Heart right ventricle (tissue), 16 donors: ENCODE measurements at regions of chr5 and their contacts with region 1.

Region 1: GRCh38 chr5:96714951-96715451 is 52.8 kb downstream of the CAST start:
- DNase-seq: peak in 1 of 2 donors; percentile 73
- ATAC-seq: peak; percentile 76 to 91 (median 86)
- H3K4me3 ChIP-seq: no peak overlapping the region
- H3K27ac ChIP-seq: peak overlapping the region; percentile 49 to 80 (median 65)
- H3K4me1 ChIP-seq: peaks cover 5 to 98% (median 79%) of the 10 kb centered on the region in 9 donors
- H3K27me3 ChIP-seq: no peaks in the 10 kb centered on the region
- CTCF ChIP-seq: no peak

Region 2: GRCh38 chr5:96133341-96134079 is 581.5 kb before region 1 on chr5:
- intact Hi-C with region 1: loop called in 1 of 10 experiments (anchors 5 kb)
- DNase-seq: no peak
- ATAC-seq: no peak
- H3K4me3 ChIP-seq: no peak overlapping the region
- H3K27ac ChIP-seq: no peak overlapping the region
- H3K4me1 ChIP-seq: no peaks in the 10 kb centered on the region
- H3K27me3 ChIP-seq: no peaks in the 10 kb centered on the region
- CTCF ChIP-seq: no peak